ENCODE measurements at regions of chr2 and their contacts with region 1.

Region 1: DNA sequence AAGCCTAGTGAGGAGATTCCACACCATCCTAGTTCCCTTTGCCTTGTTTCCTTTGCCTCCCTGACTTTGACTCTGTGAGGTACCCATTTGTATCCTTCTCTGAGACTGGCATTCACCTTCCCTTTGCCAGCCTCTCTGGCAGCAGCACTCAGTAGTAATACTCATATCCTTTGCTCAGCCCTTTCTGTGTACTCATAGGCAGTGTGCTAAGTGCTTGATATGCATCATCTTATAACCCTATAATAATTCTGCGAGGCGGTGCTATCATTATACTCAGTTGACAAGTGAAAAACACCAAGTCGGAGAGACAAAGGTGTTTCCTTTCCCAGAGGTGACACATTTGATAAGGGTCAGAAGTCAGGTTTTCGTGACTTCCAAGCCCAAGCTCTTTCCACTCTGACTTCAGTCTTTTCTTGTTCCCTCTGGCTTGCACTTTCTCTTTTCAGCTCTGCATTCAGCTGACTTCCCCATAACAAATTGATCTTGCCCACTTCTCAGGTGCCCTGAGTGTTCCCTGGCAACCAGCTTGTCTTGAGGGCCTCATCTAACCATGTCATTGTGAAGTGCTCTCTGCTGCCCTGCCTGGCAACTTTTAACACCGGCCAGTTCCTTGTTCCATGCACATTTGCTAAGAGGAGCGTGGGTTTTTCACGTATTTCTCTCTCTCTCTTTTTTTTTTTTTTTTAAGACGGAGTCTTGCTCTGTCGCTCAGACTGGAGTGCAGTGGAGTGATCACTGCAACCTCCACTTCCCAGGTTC is 94.5 kb upstream of the UPP2 start:
- DNase-seq: peak in 3 of 6 donors; percentile 25 to 50 (median 45)
- ATAC-seq: peak; percentile 70 to 85 (median 82)
- H3K4me3 ChIP-seq: no peak overlapping the region
- H3K27ac ChIP-seq: peak overlapping the region in 1 of 4 donors; percentile 1
- H3K4me1 ChIP-seq: peaks cover 0 to 16% (median 16%) of the 10 kb centered on the region in 3 donors
- H3K27me3 ChIP-seq: no peaks in the 10 kb centered on the region
- CTCF ChIP-seq: no peak

Region 2: DNA sequence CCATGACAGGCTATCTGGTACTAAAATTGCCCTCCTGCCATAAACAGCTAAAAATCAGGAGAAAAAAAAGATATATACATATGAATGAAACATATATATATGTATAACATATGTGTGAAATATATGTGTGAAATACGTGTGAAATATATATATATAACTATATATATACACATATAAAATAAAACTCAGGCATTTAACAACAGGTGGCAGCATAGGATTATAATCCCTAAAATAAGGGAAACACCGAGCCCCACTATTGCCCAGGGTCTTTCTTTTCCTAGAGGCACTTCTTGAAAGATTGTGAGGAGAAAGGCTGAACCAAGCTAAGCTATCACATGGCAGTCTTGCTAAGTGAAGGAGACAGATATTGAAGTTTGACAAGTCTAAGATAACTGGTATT is 497.4 kb before region 1 on chr2:
- intact Hi-C with region 1: loop called in 2 of 3 experiments (anchors 10 kb)
- DNase-seq: no peak
- ATAC-seq: no peak
- H3K4me3 ChIP-seq: no peak overlapping the region
- H3K27ac ChIP-seq: no peak overlapping the region
- H3K4me1 ChIP-seq: no peaks in the 10 kb centered on the region
- H3K27me3 ChIP-seq: no peaks in the 10 kb centered on the region
- CTCF ChIP-seq: no peak

Region 3: DNA sequence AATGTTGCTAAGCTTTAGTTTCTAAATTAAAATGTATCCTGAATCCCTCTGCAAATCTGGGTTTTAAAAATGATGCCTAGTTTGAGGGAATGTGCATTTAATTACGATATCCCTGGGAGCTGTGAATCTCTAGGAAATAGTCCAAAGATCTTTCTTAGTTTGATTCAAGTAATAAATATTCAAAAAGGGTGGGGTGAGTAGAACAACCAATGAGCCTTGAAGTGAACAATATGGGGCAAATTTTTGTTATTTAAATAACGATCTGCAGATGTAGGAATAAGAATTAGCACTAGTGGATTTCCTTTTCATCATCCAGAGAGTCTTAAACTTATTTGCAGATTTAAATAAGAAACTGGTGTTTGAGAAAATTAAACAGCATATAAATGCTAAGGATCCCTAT is 237.3 kb before region 1 on chr2:
- intact Hi-C with region 1: loop called (anchors 5 to 10 kb)
- DNase-seq: no peak
- ATAC-seq: no peak
- H3K4me3 ChIP-seq: no peak overlapping the region
- H3K27ac ChIP-seq: no peak overlapping the region
- H3K4me1 ChIP-seq: no peaks in the 10 kb centered on the region
- H3K27me3 ChIP-seq: no peaks in the 10 kb centered on the region
- CTCF ChIP-seq: no peak

Region 4: DNA sequence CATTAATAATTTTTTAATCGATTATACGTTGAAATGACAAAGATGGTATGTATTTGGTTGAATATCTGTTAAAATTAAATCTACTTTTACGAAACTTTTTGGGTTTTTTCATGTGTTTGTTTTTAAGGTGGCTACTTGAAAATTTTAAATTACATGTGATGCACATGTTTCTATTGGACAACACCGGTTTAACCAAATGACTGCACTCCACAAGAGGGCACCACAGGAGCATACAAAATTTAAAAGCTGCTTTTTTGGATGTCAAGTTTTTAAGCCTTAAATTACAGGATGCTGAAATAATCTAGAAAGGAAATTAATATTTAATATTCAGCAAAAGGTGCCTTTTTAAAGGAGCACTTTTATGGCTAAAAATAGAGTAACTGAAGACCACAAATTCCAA is 229.7 kb before region 1 on chr2:
- intact Hi-C with region 1: loop called (anchors 5 to 10 kb)
- DNase-seq: peak in 1 of 6 donors; percentile 68
- ATAC-seq: peak; percentile 55 to 72 (median 64)
- H3K4me3 ChIP-seq: no peak overlapping the region
- H3K27ac ChIP-seq: no peak overlapping the region
- H3K4me1 ChIP-seq: peaks cover 0 to 18% (median 13%) of the 10 kb centered on the region in 3 donors
- H3K27me3 ChIP-seq: no peaks in the 10 kb centered on the region
- CTCF ChIP-seq: peak; percentile 16 to 47 (median 34)

Region 5: DNA sequence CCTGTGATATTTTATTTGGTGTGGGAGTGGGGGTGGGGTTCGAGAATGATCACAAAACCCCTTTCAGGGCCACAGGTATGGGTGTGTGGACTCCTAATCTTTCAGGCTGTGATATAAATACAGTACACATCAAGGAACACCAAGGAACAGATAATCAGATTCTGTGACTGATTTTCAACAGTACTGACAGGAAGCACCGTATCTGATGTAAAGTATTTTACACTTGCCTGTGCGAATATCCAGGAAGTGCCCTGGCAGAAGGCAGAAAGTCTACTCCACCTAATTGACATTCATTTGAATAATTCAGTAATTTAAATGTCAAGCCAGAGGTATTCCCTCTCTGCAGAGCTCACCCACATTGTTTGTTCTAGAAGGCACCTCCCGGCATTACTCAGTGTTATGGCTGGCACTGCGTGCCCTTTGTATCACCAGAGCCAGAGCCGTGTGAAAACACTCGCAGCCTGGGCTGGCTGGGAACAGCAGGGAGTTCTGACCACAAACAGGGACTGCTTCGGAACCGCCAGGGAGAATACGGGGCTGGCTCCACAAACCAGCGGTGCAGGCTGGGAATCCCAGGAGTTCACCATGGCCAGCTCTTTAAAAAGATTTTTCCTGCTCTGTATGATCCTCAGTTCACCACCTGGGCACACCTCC is 222.8 kb before region 1 on chr2:
- intact Hi-C with region 1: loop called (anchors 5 to 10 kb)
- DNase-seq: peak; percentile 70 to 84 (median 76)
- ATAC-seq: peak; percentile 86 to 92 (median 90)
- H3K4me3 ChIP-seq: peak overlapping the region in 1 of 4 donors; percentile 13
- H3K27ac ChIP-seq: peak overlapping the region; percentile 70 to 85 (median 78)
- H3K4me1 ChIP-seq: peaks cover 23 to 52% (median 52%) of the 10 kb centered on the region in 3 donors
- H3K27me3 ChIP-seq: no peaks in the 10 kb centered on the region
- CTCF ChIP-seq: no peak

Measured in pancreas (tissue), 10 donors.